ENCODE measurements at regions of chr5 and their contacts with region 1.

Region 1: GRCh38 chr5:141598391-141599350 is 20.1 kb downstream of the DIAPH1 start:
- DNase-seq: no peak
- CTCF ChIP-seq: no peak

Region 2: DNA sequence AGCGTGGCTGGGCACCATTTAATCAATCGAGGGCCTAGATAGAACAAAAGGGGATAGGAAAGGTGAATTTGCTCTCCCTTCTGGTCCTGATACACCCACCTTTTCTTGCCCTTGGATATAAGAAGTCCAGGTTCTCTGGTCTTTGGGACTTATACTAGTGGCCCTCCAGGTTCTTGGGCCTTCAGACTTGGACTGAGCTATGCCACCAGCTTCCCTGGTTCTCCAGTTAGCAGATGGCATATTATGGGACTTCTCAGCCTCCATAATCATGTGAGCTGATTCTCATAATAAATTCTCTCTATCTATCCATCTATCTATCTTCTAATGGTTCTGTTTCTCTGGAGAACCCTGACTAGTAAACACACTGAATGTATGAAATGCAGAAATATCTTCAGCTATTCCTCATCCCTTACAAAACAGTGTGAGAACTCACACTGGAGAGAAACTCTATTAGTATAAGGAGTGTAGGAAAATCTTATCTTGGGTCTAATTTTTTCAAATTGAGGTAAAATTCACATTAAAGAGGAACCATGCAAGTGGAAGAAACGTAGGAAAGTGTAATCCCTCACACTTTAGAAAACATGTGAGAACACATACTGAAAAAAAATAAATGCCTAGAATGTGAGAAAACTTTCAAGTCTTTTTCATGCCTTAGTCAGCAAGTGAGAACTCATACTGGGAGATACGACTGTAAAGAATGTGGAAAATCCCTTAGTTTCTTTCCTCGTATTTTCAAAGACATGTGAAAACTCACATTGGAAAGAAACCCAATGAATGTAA is 338.0 kb before region 1 on chr5:
- CTCF ChIA-PET with region 1: no interaction called
- POLR2A ChIA-PET with region 1: no interaction called
- DNase-seq: no peak
- CTCF ChIP-seq: no peak

Region 3: DNA sequence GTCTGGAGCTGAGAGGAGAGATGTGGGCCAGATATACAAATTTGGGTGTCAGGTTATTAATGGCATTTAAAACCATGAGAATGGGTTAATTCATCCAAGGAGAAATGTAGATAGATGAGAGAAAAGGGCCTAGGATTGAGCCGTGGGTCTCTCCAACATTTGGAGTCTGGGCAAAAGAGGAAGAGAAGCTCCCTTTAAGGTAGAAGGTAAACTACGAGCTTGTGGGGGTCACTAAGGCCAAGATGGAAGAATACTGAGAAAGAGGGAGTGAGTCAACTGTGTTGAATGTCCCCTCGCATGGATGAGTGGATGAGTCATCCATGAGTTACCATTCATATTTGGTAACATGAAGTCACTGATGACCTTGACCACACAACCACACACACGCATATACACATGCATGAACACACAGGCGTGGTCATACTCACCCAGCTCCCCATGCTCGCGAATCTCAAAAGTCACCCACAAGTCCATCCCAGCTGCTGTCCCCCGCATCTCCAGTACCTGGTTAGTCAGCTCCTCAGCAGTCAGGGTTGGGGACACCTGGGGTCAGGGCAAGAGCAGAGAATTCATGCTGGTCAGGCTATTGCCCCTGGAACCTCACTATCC is 59.4 kb after region 1 on chr5:
- CTCF ChIA-PET with region 1: interaction called, 20 read pairs
- POLR2A ChIA-PET with region 1: no interaction called
- DNase-seq: peak; percentile 56
- CTCF ChIP-seq: no peak

Measured in GM10248 (cell line).